A549 (cell line): ENCODE measurements at regions of chr5 and their contacts with region 1.

Region 1: DNA sequence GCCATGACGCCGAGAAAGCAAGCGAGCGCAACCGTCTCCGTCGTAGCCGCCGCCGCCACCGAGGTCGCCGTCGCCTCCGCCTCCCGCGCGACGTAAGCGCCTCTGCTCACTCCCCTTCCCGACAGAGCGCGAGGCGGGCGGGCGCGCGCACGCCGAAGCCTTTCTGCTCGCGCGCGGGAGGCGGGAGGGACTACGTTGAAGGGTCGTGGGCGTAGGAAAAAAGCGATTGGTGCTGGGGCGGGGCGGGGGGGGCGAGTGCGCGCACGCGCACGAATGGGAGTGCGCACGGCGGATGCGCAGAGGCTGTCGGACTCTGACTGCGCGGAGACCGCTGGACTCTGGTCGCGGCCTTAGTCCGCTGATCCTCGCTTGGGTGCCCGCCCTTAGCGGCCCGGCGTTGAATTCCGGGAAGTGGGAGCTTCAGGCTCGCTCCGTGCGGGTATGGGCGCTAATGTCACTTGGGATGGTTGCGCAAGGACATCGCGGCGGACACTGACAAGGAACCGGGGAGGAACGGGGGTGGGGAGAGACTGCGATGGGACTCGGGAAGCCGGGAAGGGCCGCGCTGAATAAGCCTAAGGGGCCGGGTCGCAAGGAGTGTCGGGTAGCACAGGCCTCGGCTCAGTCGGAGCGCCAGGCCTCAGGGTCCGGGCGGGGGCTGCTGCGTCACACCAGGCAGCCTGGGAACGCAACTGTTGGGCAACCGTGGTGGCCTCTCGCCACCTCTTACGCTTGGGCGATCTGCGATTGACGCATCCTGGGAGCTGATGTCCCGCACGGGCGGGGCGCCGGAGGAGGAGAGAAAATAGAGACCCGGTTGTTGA is at the start of gene CHD1:
- DNase-seq: peak; percentile 92 to 97
- ATAC-seq: peak; percentile 78 to 82
- H3K4me3 ChIP-seq: peak within 1 kb of the TSS; percentile 79
- H3K27ac ChIP-seq: peak within 1 kb of the TSS; percentile 96 to 98
- H3K4me1 ChIP-seq: peaks cover 27% of the 10 kb centered on the region
- CTCF ChIP-seq: no peak
- EP300 ChIP-seq: peak in 1 of 2 experiments; percentile 39; a peak in 1 of 5 replicates
- POLR2A ChIP-seq: peak; percentile 68
- RAD21 ChIP-seq: no peak
- polyA plus RNA-seq, gene CHD1: 43.2 and 53.9 TPM in 2 replicates

Region 2: GRCh38 chr5:99025298-99026045 is 96.4 kb after region 1 on chr5:
- CTCF ChIA-PET with region 1: no interaction called
- POLR2A ChIA-PET with region 1: interaction called, 12 read pairs
- DNase-seq: peak in 1 of 2 experiments; percentile 60
- ATAC-seq: peak in 1 of 2 experiments; percentile 74; a peak in 3 of 6 replicates
- H3K4me3 ChIP-seq: no peak overlapping the region
- H3K27ac ChIP-seq: peak overlapping the region; percentile 75 to 78
- H3K4me1 ChIP-seq: peaks cover 21% of the 10 kb centered on the region
- CTCF ChIP-seq: no peak
- EP300 ChIP-seq: no peak
- POLR2A ChIP-seq: no peak
- RAD21 ChIP-seq: no peak